ENCODE measurements at regions of chr6 and their contacts with region 1.

Region 1: DNA sequence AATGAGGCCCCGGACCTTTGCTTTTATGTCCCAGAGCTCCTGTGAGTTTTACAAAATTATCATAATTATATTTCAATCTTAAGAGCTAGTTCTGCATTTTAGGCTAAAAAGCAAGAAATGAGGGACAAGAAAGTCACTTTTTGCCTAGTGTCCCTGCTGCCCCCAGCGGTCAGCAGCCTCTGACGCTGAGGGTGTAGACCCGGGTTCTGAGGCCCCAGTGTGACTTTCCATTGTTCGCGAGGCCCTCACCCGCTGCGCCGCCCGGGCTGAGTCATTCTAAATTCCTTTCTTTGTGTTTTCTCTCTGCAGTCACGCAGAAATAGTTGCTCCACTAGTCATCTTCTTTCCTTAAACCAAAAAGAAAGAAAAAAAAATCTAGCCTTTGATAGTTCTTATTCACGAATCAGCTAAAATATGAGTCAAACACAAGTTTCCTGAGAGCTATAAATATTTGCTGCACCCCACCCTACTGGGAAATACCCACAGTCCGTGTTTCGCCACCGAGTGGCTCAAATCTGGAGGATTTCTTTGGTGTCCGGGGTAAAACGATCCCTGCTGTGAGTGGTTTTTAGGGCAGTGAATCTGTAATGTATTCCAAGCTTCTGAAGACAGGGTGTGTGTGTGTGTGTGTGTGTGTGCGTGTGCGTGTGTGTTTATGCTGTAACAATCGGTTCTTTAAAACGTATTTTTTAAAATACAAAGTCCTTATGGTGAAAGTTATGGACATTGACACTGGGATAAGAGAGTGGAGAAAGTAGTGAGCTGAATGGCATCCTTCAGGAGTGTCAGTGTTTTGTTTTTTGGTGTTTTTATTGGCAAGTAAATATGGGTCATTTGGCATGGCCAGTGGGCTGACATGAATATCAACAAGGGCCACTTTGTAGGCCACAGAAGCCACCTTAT is 59.7 kb upstream of the EEF1A1 start:
- DNase-seq: peak; percentile 97
- H3K4me3 ChIP-seq: peak overlapping the region; percentile 60
- H3K27ac ChIP-seq: peak overlapping the region; percentile 99
- H3K4me1 ChIP-seq: peaks cover 61% of the 10 kb centered on the region
- H3K27me3 ChIP-seq: no peaks in the 10 kb centered on the region
- CTCF ChIP-seq: peak; percentile 56; the same call in 1 of the 2 replicates

Region 2: GRCh38 chr6:73515204-73515655 is 65.3 kb before region 1 on chr6:
- CTCF ChIA-PET with region 1: interaction called, 20 read pairs
- POLR2A ChIA-PET with region 1: interaction called, 16 read pairs
- intact Hi-C with region 1: no loop called
- DNase-seq: peak in 1 of 2 experiments; percentile 36
- H3K4me3 ChIP-seq: no peak overlapping the region
- H3K27ac ChIP-seq: peak overlapping the region; percentile 76
- H3K4me1 ChIP-seq: peaks cover 15% of the 10 kb centered on the region; the same call in 1 of the 2 replicates
- H3K27me3 ChIP-seq: no peaks in the 10 kb centered on the region
- CTCF ChIP-seq: no peak

Region 3: GRCh38 chr6:73560182-73560732 is 20.2 kb before region 1 on chr6:
- CTCF ChIA-PET with region 1: interaction called, 6 read pairs
- POLR2A ChIA-PET with region 1: interaction called, 33 read pairs
- intact Hi-C with region 1: no loop called
- DNase-seq: no peak
- H3K4me3 ChIP-seq: no peak overlapping the region
- H3K27ac ChIP-seq: no peak overlapping the region
- H3K4me1 ChIP-seq: 0 out of 2 replicates have a peak, but pooled peaks cover under 1% of the 10 kb centered on the region
- H3K27me3 ChIP-seq: no peaks in the 10 kb centered on the region
- CTCF ChIP-seq: no peak

Region 4: GRCh38 chr6:73604020-73604419 is 23.5 kb after region 1 on chr6:
- CTCF ChIA-PET with region 1: interaction called, 3 read pairs
- POLR2A ChIA-PET with region 1: no interaction called
- intact Hi-C with region 1: loop called (anchors 2 kb)
- DNase-seq: no peak
- H3K4me3 ChIP-seq: no peak overlapping the region
- H3K27ac ChIP-seq: no peak overlapping the region
- H3K4me1 ChIP-seq: no peaks in the 10 kb centered on the region
- H3K27me3 ChIP-seq: no peaks in the 10 kb centered on the region
- CTCF ChIP-seq: no peak

Region 5: DNA sequence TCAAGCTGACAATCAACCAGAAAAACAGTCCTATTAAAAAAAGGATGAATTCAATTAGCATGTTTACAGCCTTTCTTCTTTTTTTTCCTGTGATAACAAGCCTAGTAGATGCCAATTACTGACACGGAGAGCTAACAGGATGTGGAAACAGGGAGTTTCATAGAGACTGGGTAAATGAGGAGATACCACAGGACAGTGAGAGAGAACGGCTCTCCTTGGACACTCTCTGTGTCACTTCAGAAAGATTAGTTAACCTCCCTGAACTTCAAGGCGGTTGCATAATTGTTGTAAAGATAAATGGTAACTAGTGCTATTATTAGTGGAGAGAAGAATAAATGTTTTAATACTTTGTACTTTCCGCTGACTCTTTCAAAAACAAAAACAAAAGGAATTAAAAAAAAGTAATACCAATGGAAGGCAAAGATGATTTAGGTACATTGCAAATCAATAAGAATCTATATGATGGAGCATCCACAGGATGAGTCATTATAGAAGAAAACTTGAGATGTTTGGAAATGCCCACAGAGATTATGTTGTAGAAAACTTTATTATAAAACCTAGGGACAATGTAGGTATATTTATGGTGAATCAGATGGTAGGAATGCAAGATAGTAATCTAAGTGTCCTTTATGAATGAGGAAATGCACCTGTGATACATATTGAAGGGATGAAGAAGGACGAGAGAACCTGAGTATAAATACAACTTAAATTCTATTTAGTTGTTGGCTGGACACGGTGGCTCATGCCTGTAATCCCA is 58.7 kb after region 1 on chr6:
- CTCF ChIA-PET with region 1: no interaction called
- POLR2A ChIA-PET with region 1: interaction called, 6 read pairs
- intact Hi-C with region 1: loop called (anchors 2 kb)
- DNase-seq: peak in 1 of 2 experiments; percentile 97
- H3K4me3 ChIP-seq: no peak overlapping the region
- H3K27ac ChIP-seq: peak overlapping the region; percentile 76
- H3K4me1 ChIP-seq: peaks cover 58% of the 10 kb centered on the region
- H3K27me3 ChIP-seq: no peaks in the 10 kb centered on the region
- CTCF ChIP-seq: no peak

Region 6: GRCh38 chr6:73675466-73676098 is 95.1 kb after region 1 on chr6:
- CTCF ChIA-PET with region 1: no interaction called
- POLR2A ChIA-PET with region 1: no interaction called
- intact Hi-C with region 1: no loop called
- DNase-seq: peak; percentile 70 to 81
- H3K4me3 ChIP-seq: no peak overlapping the region
- H3K27ac ChIP-seq: no peak overlapping the region
- H3K4me1 ChIP-seq: peaks cover 16% of the 10 kb centered on the region
- H3K27me3 ChIP-seq: no peaks in the 10 kb centered on the region
- CTCF ChIP-seq: peak; percentile 96

Region 7: GRCh38 chr6:74152096-74152675 is 571.7 kb after region 1 on chr6:
- CTCF ChIA-PET with region 1: no interaction called
- POLR2A ChIA-PET with region 1: no interaction called
- intact Hi-C with region 1: no loop called
- DNase-seq: no peak
- H3K4me3 ChIP-seq: no peak overlapping the region
- H3K27ac ChIP-seq: no peak overlapping the region
- H3K4me1 ChIP-seq: no peaks in the 10 kb centered on the region
- H3K27me3 ChIP-seq: no peaks in the 10 kb centered on the region
- CTCF ChIP-seq: no peak